Common myeloid progenitor, CD34-positive (primary cell): ENCODE measurements at regions of chr10 and their contacts with region 1.

Region 1: GRCh38 chr10:69716711-69717560 is 84.8 kb upstream of the COL13A1 start:
- DNase-seq: peak; percentile 23 to 42 (median 23)
- H3K4me3 ChIP-seq: no peak overlapping the region
- H3K27ac ChIP-seq: no peak overlapping the region
- H3K4me1 ChIP-seq: no peaks in the 10 kb centered on the region
- H3K27me3 ChIP-seq: peaks cover 0 to 5% (median 0%) of the 10 kb centered on the region in 5 experiments

Region 2: GRCh38 chr10:69574571-69574978 is 142.4 kb before region 1 on chr10:
- CTCF ChIA-PET with region 1: no interaction called
- POLR2A ChIA-PET with region 1: no interaction called
- DNase-seq: peak in 2 of 3 donors; percentile 25 to 35
- H3K4me3 ChIP-seq: no peak overlapping the region
- H3K27ac ChIP-seq: no peak overlapping the region
- H3K4me1 ChIP-seq: peaks cover 0 to 29% (median 26%) of the 10 kb centered on the region in 4 experiments
- H3K27me3 ChIP-seq: peaks cover 8 to 100% (median 62%) of the 10 kb centered on the region in 5 experiments

Region 3: GRCh38 chr10:69696073-69696731 is 20.7 kb before region 1 on chr10:
- CTCF ChIA-PET with region 1: interaction called, 25 read pairs
- POLR2A ChIA-PET with region 1: interaction called, 3 read pairs
- DNase-seq: peak; percentile 33 to 63 (median 60)
- H3K4me3 ChIP-seq: no peak overlapping the region
- H3K27ac ChIP-seq: no peak overlapping the region
- H3K4me1 ChIP-seq: no peaks in the 10 kb centered on the region
- H3K27me3 ChIP-seq: peaks cover 0 to 8% (median 2%) of the 10 kb centered on the region in 5 experiments

Region 4: DNA sequence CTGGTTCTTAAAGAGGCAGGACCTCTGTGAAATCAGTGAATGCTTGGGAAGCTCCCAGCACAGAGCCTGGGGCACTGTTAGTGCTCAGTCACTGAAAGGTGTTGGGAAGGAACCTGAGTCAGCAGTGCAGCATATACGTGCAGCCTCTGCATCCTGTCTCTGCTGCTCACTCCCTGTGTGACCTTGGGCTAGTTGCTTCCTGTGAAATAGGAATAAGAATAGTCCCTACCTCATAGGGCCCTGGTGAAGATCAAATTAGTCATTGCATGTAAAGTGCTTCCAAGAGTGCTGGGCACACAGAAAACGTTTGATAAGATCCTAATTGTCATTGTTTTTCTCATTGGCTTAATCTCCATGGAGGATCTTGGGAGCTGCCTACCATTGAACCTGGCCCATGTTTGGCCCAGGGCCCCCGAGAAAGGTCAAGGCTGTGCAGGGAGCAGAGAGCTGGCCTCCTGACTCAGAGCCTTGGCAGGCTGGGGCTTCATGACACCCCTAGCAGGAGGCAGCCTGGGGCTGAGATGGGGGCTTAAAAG is 11.5 kb after region 1 on chr10:
- CTCF ChIA-PET with region 1: interaction called, 13 read pairs
- POLR2A ChIA-PET with region 1: no interaction called
- DNase-seq: no peak
- H3K4me3 ChIP-seq: no peak overlapping the region
- H3K27ac ChIP-seq: no peak overlapping the region
- H3K4me1 ChIP-seq: peaks cover 0 to 4% (median 0%) of the 10 kb centered on the region in 4 experiments
- H3K27me3 ChIP-seq: peaks cover 0 to 8% (median 3%) of the 10 kb centered on the region in 5 experiments